ENCODE measurements at regions of chr13 and their contacts with region 1.

Region 1: GRCh38 chr13:80363890-80364503 is 23.1 kb upstream of the SPRY2 start:
- DNase-seq: no peak
- ATAC-seq: no peak

Region 2: DNA sequence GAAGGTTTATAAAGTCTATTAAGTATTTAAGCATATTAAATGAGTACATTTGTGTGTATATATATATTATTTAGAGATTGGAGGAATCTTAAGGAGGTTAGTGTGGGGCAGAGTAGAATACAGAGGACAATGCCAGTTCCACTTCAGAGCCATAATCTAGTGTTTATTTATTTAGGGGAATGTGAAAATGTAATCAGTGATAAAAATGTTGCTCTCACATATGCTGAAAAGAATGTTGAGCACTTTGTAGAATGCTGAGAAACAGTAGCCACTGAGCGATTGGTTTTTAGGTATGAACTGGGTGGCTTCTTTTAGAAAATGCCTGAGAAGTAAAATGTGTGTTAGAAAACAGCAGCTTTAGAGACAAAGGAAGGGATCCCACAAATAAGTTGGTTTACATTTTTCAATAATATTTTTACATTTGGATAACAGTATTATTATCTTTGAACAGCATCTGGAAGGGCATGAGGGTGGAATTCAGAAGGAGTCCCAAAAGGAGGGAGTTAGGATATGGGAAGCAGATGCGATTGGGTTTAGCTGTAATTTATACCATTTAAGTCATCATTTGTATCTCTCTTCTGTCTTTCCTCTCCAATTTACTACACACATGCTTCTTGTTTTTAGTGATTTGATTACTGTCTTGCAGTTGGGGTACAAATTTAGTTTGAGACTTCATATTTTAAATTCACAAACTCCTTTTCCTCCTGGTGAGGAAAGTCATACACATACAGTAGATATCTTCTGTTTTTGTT is 814.5 kb before region 1 on chr13:
- intact Hi-C with region 1: loop called (anchors 10 kb)
- DNase-seq: no peak
- ATAC-seq: no peak

Region 3: DNA sequence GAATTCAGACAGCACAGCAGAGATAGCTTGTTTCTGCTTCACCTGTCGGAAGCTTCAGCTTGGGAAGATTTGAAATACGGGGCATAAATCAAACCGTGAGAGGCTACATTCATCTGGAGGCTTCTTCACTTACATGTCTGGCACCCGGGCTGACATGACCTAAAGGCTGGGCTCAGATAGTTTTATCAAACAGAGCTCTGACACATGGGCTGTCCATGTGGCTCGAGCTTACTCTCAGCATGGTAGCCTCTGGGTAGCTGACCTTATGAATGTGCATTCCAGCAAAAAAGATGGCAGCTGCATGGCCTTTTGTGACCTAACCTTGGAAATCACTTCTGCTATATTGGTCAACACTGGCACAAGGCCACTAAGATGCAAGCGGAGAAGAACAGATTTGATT is 468.6 kb before region 1 on chr13:
- intact Hi-C with region 1: no loop called
- DNase-seq: no peak
- ATAC-seq: no peak

Region 4: GRCh38 chr13:80334597-80335260 is 29.3 kb before region 1 on chr13:
- intact Hi-C with region 1: no loop called
- DNase-seq: no peak
- ATAC-seq: no peak

Measured in sciatic nerve (tissue), 2 donors.